Activated naive CD4-positive, alpha-beta T cell treated with anti-CD3 and anti-CD28 coated beads for 36 hours (primary cell): ENCODE measurements at regions of chr7 and their contacts with region 1.

Region 1: DNA sequence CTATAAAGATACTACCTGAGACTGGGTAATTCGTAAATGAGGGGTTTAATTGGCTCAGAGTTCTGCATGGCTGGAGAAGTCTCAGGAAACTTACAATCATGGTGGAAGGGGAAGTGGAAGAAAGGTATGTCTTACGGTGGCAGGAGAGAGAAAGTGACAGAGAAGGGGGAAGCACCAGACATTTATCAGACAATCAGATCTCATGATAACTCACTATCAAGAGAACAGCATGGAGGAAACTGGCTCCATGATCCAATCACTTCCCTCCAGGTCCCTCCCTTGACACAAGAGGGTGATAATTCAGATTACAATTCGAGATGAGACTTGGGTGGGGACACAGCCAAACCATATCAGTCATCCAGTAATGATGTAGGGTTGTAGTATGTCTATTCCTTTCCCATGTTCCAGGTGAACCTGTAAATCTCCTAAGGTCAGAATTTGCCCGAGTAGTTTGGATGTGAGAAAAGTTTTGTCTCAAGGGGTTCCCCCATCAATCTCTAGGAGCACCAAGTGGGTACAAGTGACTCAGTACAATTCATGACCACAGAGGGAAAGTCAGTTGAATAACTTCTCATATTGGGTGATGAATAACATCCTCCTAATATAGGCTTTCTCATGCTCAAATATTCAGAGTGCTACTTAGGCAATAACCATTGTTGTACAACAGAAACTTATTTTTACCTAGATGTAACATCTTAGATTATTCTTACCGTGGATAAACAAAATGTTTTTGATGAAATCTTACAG is 39.7 kb upstream of the MTPN start:
- DNase-seq: peak; percentile 10
- H3K4me3 Mint-ChIP-seq: no peak overlapping the region
- H3K27ac Mint-ChIP-seq: no peak overlapping the region
- H3K4me1 Mint-ChIP-seq: peaks cover 26% of the 10 kb centered on the region
- H3K27me3 Mint-ChIP-seq: peaks cover 26% of the 10 kb centered on the region

Region 2: DNA sequence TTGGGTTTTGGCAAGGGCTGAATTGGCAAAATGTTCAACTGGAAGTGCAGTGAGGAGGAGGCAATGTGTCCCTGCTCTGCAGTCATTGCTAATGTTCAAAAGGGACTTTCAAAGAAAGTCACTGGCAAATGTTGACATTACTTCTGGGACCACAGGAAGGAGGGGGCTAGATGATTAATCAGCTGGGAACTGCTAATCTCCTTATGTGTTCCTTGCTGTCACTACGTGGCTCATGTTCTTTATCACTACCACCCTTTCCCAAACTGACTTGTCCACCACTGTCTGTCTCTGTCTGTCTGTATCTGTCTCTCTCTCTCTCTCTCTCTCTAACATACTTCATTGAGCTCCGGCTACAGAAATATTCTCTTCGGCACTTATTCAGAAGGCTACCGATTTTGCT is 47.3 kb after region 1 on chr7:
- CTCF ChIA-PET with region 1: no interaction called
- intact Hi-C with region 1: loop called (anchors 1 kb)
- DNase-seq: peak; percentile 8
- H3K4me3 Mint-ChIP-seq: no peak overlapping the region
- H3K27ac Mint-ChIP-seq: peak overlapping the region; percentile 21
- H3K4me1 Mint-ChIP-seq: peaks cover 13% of the 10 kb centered on the region
- H3K27me3 Mint-ChIP-seq: peaks cover 11% of the 10 kb centered on the region